Activated T-helper 1 cell treated with anti-CD3 and anti-CD28 coated beads, Interleukin-12 subunit alpha, Interleukin-12 subunit beta, Interleukin-2, Interleukin-4 antibody, amounts not matched to agents 30 ng/mL and 10 ng/mL and 1 ng/mL, durations not matched to agents 14 hours and 24 hours and 36 hours (primary cell): ENCODE measurements at regions of chr1 and their contacts with region 1.

Region 1: GRCh38 chr1:243946946-243947345 is 96.9 kb upstream of the AKT3 start:
- DNase-seq: no peak
- H3K4me3 Mint-ChIP-seq: no peak overlapping the region
- H3K27ac Mint-ChIP-seq: no peak overlapping the region
- H3K4me1 Mint-ChIP-seq: no peaks in the 10 kb centered on the region
- H3K27me3 Mint-ChIP-seq: peaks cover 2% of the 10 kb centered on the region

Region 2: DNA sequence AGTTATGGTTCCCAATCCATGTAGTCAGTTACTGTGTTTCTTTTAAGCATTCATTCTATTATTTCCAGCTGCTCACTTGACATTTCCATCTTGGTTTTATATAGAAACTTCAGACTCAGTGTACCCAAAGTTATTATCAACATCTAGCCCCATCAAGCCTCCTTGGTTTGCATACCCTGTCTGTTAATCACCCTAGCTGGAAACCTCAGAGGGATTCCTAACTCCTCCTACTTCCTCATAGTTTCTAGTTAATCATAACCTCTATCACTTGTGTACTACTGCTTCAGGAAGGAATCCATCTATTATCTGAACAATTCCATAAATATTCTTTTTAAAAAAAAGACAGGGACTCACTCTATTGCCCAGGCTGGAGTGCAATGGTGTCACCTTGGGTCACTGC is 397.8 kb before region 1 on chr1:
- intact Hi-C with region 1: no loop called
- DNase-seq: no peak
- H3K4me3 Mint-ChIP-seq: no peak overlapping the region
- H3K27ac Mint-ChIP-seq: no peak overlapping the region
- H3K4me1 Mint-ChIP-seq: no peaks in the 10 kb centered on the region
- H3K27me3 Mint-ChIP-seq: no peaks in the 10 kb centered on the region

Region 3: GRCh38 chr1:243708210-243708609 is 238.7 kb before region 1 on chr1:
- intact Hi-C with region 1: loop called (anchors 5 kb)
- DNase-seq: no peak
- H3K4me3 Mint-ChIP-seq: no peak overlapping the region
- H3K27ac Mint-ChIP-seq: no peak overlapping the region
- H3K4me1 Mint-ChIP-seq: peaks cover 6% of the 10 kb centered on the region
- H3K27me3 Mint-ChIP-seq: peaks cover 2% of the 10 kb centered on the region

Region 4: GRCh38 chr1:243917177-243917862 is 29.6 kb before region 1 on chr1:
- intact Hi-C with region 1: no loop called
- DNase-seq: no peak
- H3K4me3 Mint-ChIP-seq: peak overlapping the region; percentile 85
- H3K27ac Mint-ChIP-seq: peak overlapping the region; percentile 11
- H3K4me1 Mint-ChIP-seq: peaks cover 22% of the 10 kb centered on the region
- H3K27me3 Mint-ChIP-seq: peaks cover 52% of the 10 kb centered on the region